ENCODE measurements at regions of chr6 and their contacts with region 1.

Region 1: GRCh38 chr6:28252009-28252975 is at the start of gene ZKSCAN4:
- DNase-seq: peak; percentile 83
- total RNA-seq, gene ZKSCAN4: 2.4 TPM

Region 2: GRCh38 chr6:28136585-28137504 is 115.4 kb before region 1 on chr6:
- intact Hi-C with region 1: loop called (anchors 10 kb)
- DNase-seq: peak; percentile 92

Region 3: GRCh38 chr6:28218271-28219248 is 33.7 kb before region 1 on chr6:
- intact Hi-C with region 1: loop called (anchors 2 kb)
- DNase-seq: peak; percentile 89

Region 4: DNA sequence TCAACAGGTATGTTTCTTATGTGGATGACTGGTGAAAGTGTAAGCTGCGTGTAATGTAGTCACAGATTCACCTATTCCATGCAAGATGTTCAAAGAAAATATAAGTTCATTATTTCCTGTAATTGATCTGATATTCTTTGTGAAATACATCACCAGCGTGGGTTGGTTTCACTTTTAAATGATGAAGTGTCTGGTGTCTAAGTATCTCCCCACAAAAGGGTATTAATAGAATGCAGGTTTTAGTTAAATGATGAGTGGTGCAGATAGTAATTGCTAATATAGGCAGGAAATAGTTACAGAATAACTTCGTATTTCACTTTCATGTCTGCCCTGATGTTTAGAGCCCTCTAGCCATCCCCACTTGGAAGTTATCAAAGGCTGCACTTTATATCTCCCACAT is 51.3 kb after region 1 on chr6:
- intact Hi-C with region 1: no loop called
- DNase-seq: no peak

Region 5: DNA sequence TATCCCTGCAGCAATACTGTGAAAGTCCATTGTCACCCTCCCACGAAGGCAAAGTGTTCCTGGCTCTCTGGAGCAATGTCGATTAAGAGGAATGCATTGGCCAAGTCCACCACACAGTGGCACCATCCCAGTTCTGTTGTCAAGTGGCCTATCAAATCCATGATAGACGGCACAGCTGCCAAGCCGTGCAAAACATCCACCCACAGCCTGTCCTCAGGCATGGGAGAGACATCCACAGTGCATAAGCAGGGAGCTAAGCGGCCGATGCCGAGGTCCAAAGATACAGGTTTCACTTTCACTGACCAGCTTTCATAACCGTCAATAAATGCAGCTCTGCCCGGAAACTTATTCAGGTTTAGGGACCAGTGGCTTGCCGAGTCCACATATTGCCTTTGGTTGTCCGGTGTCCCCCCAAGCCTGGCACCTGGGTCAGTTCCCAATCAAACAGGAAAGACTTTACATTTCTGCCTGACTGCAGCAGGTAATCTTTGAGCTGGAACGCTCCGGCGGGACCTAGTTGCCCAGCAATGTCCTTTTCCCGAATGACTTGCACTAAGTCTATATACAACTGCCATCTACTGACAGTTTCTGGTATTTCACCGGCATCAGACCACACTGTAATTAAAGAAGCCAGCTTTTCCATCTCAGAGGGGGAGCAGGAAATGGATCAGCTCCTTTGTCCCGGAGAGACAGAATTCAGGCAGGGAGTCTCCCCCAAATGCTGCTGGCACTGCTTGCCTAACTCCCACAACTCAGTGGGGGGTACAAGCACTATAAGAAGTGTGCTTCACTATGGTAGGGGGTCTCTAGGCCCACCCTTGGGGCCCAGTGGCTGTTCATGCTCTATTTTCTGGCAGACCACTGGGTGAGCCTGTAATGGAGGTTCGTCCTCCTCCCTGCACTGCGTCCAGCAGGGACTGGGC is 103.7 kb after region 1 on chr6:
- intact Hi-C with region 1: loop called (anchors 5 kb)
- DNase-seq: peak; percentile 89

Measured in cardiac septum (tissue), 1 donor.